Thyroid gland (tissue), 4 donors: ENCODE measurements at regions of chr7 and their contacts with region 1.

Region 1: GRCh38 chr7:150451097-150451793 is 815 bp downstream of the GIMAP8 start:
- DNase-seq: peak; percentile 19 to 20
- H3K4me3 ChIP-seq: peak overlapping the region in 1 of 3 donors; percentile 35
- H3K27ac ChIP-seq: peak overlapping the region; percentile 49 to 57 (median 55)
- H3K4me1 ChIP-seq: peaks cover 14 to 21% of the 10 kb centered on the region in 2 donors
- H3K27me3 ChIP-seq: no peaks in the 10 kb centered on the region
- CTCF ChIP-seq: no peak
- POLR2A ChIP-seq: peak in 1 of 2 donors; percentile 36

Region 2: DNA sequence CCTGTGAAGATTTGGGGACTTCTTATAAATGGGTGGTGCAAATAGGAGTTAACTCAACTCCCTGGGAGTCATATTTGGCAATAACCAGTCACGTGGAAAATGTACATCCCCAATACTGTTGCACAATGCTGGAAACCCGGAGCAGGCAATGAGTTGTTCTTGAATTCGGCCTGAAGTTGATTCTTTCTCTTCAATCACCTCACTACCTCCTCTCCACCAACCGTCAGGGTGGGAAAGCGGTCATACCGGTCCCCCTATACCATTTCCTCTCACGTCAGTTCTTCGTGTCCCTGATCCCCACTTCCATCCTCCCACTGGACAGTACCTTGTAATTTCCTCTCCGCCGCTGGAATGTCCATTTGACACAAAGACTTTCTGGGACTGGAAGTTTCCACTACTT is 288.8 kb after region 1 on chr7:
- intact Hi-C with region 1: loop called (anchors 10 kb)
- DNase-seq: no peak
- H3K4me3 ChIP-seq: peak overlapping the region in 1 of 3 donors; percentile 15
- H3K27ac ChIP-seq: peak overlapping the region in 2 of 3 donors; percentile 64 to 86
- H3K4me1 ChIP-seq: no peaks in the 10 kb centered on the region
- H3K27me3 ChIP-seq: no peaks in the 10 kb centered on the region
- CTCF ChIP-seq: no peak
- POLR2A ChIP-seq: no peak